Naive thymus-derived CD4-positive, alpha-beta T cell (primary cell): ENCODE measurements at regions of chr1 and their contacts with region 1.

Region 1: DNA sequence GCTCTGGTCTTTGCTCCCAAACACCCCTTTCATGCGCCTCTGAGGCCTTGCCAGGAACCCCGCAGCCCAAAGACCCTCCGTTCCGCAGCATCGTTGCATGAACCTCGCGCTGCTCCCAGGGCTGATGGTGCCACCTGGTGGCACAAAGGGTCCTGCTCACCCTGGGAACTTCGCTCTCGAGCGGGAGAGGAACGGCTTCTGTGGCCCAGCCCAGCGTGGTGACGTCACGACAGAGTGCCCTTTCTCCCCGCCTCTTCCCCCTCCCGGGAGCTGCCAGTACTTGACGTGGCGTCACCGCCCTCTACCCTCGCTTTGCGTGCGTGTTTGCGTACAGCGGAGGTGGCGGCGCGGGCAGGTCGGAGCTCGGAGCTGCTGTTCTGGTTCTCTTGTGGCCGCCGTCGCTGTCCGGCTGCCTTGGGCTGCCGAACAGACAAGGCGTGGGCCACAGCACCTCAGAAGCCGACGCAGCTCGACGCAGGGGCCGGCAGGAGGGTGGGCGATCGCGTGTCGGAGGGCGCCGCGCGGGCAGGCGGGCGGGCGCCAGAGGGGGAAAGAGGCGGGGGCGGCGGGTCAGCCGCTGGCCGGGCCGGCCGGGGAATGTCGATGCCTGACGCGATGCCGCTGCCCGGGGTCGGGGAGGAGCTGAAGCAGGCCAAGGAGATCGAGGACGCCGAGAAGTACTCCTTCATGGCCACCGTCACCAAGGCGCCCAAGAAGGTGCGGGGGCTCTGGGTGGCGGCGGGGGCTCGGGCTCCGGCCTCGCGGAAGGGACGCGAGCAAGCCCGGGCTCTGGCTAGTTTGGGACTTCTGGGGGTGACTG is at the start of gene AHCYL1:
- DNase-seq: peak; percentile 97 to 99 (median 99)
- ATAC-seq: peak; percentile 99
- H3K4me3 ChIP-seq: peak within 1 kb of the TSS; percentile 72
- H3K4me3 Mint-ChIP-seq: peak within 1 kb of the TSS; percentile 87 to 100 (median 97)
- H3K27ac ChIP-seq: peak within 1 kb of the TSS; percentile 92
- H3K27ac Mint-ChIP-seq: peak within 1 kb of the TSS; percentile 94 to 99 (median 98)
- H3K4me1 ChIP-seq: peaks cover 22 to 24% of the 10 kb centered on the region in 2 donors
- H3K4me1 Mint-ChIP-seq: peaks cover 22 to 49% (median 42%) of the 10 kb centered on the region in 7 donors
- H3K27me3 ChIP-seq: no peaks in the 10 kb centered on the region
- H3K27me3 Mint-ChIP-seq: peaks cover 0 to 6% (median 0%) of the 10 kb centered on the region in 5 donors
- total RNA-seq, gene AHCYL1: 16.6 to 60.1 (median 37.1) TPM

Region 2: GRCh38 chr1:109667452-109668122 is 317.1 kb before region 1 on chr1 and contains the start of gene GSTM2:
- CTCF ChIA-PET with region 1: interaction called, 8 read pairs
- POLR2A ChIA-PET with region 1: no interaction called
- intact Hi-C with region 1: loop called in 1 of 2 experiments (anchors 2 kb)
- DNase-seq: peak; percentile 49 to 87 (median 82)
- ATAC-seq: peak; percentile 100
- H3K4me3 ChIP-seq: peak within 1 kb of the TSS; percentile 52
- H3K4me3 Mint-ChIP-seq: peak within 1 kb of the TSS; percentile 75 to 92 (median 84)
- H3K27ac ChIP-seq: peak within 1 kb of the TSS; percentile 49
- H3K27ac Mint-ChIP-seq: peak within 1 kb of the TSS; percentile 38 to 90 (median 77)
- H3K4me1 ChIP-seq: peaks cover 0 to 11% of the 10 kb centered on the region in 2 donors
- H3K4me1 Mint-ChIP-seq: peaks cover 17 to 30% (median 24%) of the 10 kb centered on the region in 7 donors
- H3K27me3 ChIP-seq: no peaks in the 10 kb centered on the region
- H3K27me3 Mint-ChIP-seq: no peaks in the 10 kb centered on the region
- total RNA-seq, gene GSTM2: 52.2 to 201 (median 109) TPM

Region 3: DNA sequence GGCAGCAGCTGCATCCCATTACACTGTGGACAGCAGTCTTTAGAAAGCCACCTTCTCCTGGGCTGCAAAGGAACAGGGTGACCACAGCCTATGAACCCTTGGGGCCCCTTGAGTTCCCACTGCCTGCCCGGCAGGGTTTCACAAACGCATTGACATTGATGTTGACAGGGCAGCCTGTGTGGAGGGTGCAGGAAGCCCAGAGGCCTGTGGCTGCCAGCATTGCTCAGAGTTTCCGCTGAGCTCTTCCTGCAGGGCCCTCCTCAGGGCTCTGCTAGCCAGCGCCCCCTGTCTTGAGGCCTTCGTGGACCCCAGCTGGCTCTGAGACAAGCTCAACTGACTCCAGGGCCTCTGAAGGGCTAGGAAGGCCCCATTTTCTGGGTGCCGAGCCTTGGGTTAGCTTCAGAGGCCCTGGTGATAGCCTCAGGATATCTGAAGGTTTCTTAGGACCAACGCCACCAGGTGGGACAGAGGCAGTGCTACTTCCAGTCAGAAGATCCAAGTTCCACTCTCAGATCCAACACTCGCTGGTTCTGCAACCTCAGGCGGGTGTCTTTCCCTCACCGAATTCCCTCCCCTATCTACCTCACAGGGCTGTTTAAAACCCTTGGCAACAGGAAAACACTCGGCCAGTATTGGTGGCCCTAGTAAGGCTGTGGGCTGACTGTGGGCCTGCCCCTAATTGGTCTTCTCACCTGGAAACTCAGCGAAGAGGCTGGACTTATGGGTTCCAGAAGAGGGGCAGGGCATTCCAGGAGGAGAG is 193.8 kb before region 1 on chr1:
- CTCF ChIA-PET with region 1: interaction called, 46 read pairs
- POLR2A ChIA-PET with region 1: interaction called, 20 read pairs
- intact Hi-C with region 1: loop called (anchors 1 kb)
- DNase-seq: peak; percentile 47 to 78 (median 67)
- ATAC-seq: peak; percentile 93
- H3K4me3 ChIP-seq: peak overlapping the region; percentile 1
- H3K4me3 Mint-ChIP-seq: peak overlapping the region in 8 of 10 donors; percentile 26 to 62 (median 40)
- H3K27ac ChIP-seq: peak overlapping the region; percentile 44
- H3K27ac Mint-ChIP-seq: peak overlapping the region in 8 of 9 donors; percentile 49 to 94 (median 84)
- H3K4me1 ChIP-seq: peaks cover 51 to 52% of the 10 kb centered on the region in 2 donors
- H3K4me1 Mint-ChIP-seq: peaks cover 38 to 88% (median 71%) of the 10 kb centered on the region in 7 donors
- H3K27me3 ChIP-seq: no peaks in the 10 kb centered on the region
- H3K27me3 Mint-ChIP-seq: no peaks in the 10 kb centered on the region

Region 4: DNA sequence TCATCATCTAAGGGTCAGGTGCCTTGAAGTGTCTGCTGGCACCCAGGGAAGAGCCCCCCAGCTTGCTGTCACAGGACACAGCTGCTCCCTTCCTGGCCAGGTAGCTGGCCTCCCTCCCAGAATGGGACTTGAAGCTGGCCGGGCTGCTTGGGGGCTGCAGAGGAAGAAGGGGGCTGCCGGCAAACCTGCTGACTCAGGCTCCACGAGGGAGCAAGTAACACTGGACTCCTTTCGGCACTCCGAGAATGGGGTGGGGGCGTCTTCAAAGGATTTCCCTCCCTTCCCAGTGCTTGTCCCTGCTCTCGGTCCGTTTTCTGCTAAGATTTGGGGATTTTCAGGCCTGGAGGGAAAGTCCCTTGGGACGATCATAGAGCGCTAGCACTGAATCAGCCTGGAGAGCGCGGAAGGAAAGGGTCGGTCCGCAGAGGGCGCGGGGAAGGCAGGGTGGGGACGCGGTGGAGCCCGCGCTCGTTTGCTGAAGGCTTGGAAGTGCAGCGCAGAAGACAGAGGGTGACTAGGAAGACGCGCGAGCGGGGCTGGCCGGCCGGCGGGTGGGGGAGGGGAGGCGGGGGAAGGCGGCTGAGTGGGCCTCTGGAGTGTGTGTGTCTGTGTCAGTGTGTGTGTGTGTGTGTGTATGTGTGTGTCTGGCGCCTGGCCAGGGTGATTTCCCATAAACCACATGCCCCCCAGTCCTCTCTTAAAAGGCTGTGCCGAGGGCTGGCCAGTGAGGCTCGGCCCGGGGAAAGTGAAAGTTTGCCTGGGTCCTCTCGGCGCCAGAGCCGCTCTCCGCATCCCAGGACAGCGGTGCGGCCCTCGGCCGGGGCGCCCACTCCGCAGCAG is 74.3 kb before region 1 on chr1 and contains the start of gene CSF1:
- CTCF ChIA-PET with region 1: interaction called, 3 read pairs
- POLR2A ChIA-PET with region 1: interaction called, 3 read pairs
- intact Hi-C with region 1: loop called (anchors 1 kb)
- DNase-seq: peak; percentile 15 to 72 (median 35)
- ATAC-seq: peak; percentile 71
- H3K4me3 ChIP-seq: peak within 1 kb of the TSS; percentile 65
- H3K4me3 Mint-ChIP-seq: peak within 1 kb of the TSS; percentile 78 to 98 (median 88)
- H3K27ac ChIP-seq: peak within 1 kb of the TSS; percentile 43
- H3K27ac Mint-ChIP-seq: peak within 1 kb of the TSS; percentile 38 to 97 (median 73)
- H3K4me1 ChIP-seq: peaks cover 36 to 43% of the 10 kb centered on the region in 2 donors
- H3K4me1 Mint-ChIP-seq: peaks cover 43 to 83% (median 64%) of the 10 kb centered on the region in 7 donors
- H3K27me3 ChIP-seq: no peaks in the 10 kb centered on the region
- H3K27me3 Mint-ChIP-seq: peaks cover 0 to 18% (median 0%) of the 10 kb centered on the region in 5 donors
- total RNA-seq, gene CSF1: 1.4 to 125 (median 5.9) TPM

Region 5: GRCh38 chr1:110011527-110012041 is 26.9 kb after region 1 on chr1:
- CTCF ChIA-PET with region 1: interaction called, 20 read pairs
- POLR2A ChIA-PET with region 1: interaction called, 4 read pairs
- intact Hi-C with region 1: loop called (anchors 1 kb)
- DNase-seq: peak in 6 of 9 donors; percentile 19 to 49 (median 38)
- ATAC-seq: peak; percentile 96
- H3K4me3 ChIP-seq: no peak overlapping the region
- H3K4me3 Mint-ChIP-seq: no peak overlapping the region
- H3K27ac ChIP-seq: no peak overlapping the region
- H3K27ac Mint-ChIP-seq: peak overlapping the region in 3 of 9 donors; percentile 17 to 73 (median 56)
- H3K4me1 ChIP-seq: no peaks in the 10 kb centered on the region
- H3K4me1 Mint-ChIP-seq: peaks cover 2 to 13% (median 4%) of the 10 kb centered on the region in 7 donors
- H3K27me3 ChIP-seq: no peaks in the 10 kb centered on the region
- H3K27me3 Mint-ChIP-seq: no peaks in the 10 kb centered on the region